PC-9 (cell line): ENCODE measurements at regions of chr5 and their contacts with region 1.

Region 1: DNA sequence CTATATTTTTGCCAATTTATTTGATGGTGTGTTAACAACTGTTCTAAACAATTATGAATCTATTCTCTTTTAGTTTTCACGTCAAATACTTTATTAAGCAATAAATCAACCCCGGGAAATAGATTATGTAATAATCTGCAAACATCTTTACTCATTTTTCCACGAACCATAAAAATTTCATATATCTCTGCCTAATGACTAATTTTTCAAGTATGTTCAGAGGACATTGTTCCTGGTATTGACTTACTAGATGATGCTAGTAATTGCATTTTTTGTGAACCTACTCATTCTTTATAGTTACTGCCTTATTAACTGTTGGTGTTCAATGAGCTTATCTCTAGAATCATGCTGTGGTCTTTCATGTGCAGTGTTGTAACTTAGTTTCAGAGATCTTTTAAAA is 41.0 kb upstream of the FBN2 start:
- DNase-seq: peak in 1 of 2 experiments; percentile 74
- H3K4me3 ChIP-seq: no peak overlapping the region
- H3K27ac ChIP-seq: peak overlapping the region; percentile 46
- H3K4me1 ChIP-seq: peaks cover 25% of the 10 kb centered on the region
- H3K27me3 ChIP-seq: no peaks in the 10 kb centered on the region
- CTCF ChIP-seq: no peak

Region 2: GRCh38 chr5:126769703-126770102 is 1809.4 kb before region 1 on chr5:
- CTCF ChIA-PET with region 1: no interaction called
- POLR2A ChIA-PET with region 1: interaction called, 27 read pairs
- intact Hi-C with region 1: no loop called
- DNase-seq: no peak
- H3K4me3 ChIP-seq: no peak overlapping the region
- H3K27ac ChIP-seq: no peak overlapping the region
- H3K4me1 ChIP-seq: no peaks in the 10 kb centered on the region
- H3K27me3 ChIP-seq: no peaks in the 10 kb centered on the region
- CTCF ChIP-seq: no peak

Region 3: DNA sequence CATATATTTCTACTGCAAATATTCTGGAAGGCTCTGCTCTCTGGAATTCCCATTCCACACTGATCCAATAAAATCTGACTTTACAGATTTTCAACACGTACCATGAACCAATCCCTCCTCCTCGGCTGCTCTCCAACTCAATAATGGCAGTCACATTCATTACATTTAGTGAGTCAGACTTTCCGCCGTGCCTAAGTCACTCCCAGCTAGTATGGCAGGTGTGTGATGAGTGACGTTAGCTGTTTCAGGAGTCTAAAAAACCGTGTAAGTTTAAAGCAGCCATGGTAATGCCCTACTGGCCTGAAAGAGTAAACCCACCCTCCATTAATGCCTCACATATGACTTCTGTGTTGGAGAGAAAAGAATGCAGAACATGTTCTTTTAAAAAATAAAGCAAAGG is 44.4 kb before region 1 on chr5:
- CTCF ChIA-PET with region 1: no interaction called
- POLR2A ChIA-PET with region 1: no interaction called
- intact Hi-C with region 1: loop called (anchors 1 kb)
- DNase-seq: peak in 1 of 2 experiments; percentile 34
- H3K4me3 ChIP-seq: no peak overlapping the region
- H3K27ac ChIP-seq: no peak overlapping the region
- H3K4me1 ChIP-seq: no peaks in the 10 kb centered on the region
- H3K27me3 ChIP-seq: no peaks in the 10 kb centered on the region
- CTCF ChIP-seq: no peak